ENCODE measurements at regions of chr5 and their contacts with region 1.

Region 1: DNA sequence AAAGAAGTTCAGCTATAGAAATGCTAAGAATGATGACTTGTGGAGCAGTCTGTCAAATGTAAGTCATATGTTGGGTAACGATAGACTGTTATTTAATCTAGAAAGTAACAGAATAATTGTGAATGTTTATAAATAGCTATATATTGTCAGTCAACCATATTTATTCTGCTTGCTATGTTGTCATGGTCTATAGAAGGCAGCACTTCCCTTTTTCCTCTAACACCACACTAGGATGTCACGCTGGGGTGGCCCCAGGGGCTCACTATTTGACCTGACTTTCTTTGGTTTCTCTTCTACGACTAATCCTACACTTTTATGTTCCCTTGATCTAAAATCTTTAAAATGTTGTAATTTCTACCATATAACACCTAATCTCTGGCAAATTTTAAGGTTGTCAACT is 20.5 kb downstream of the ERAP2 start:
- DNase-seq: peak; percentile 59
- CTCF ChIP-seq: peak; percentile 1

Region 2: GRCh38 chr5:96844476-96844990 is 52.3 kb before region 1 on chr5:
- CTCF ChIA-PET with region 1: no interaction called
- POLR2A ChIA-PET with region 1: no interaction called
- DNase-seq: no peak
- CTCF ChIP-seq: no peak

Region 3: GRCh38 chr5:96876292-96876850 is 20.4 kb before region 1 on chr5 and contains the start of gene ERAP2:
- CTCF ChIA-PET with region 1: interaction called, 11 read pairs
- POLR2A ChIA-PET with region 1: no interaction called
- DNase-seq: peak; percentile 32
- CTCF ChIP-seq: no peak

Measured in GM10248 (cell line).